ENCODE measurements at regions of chr6 and their contacts with region 1.

Region 1: GRCh38 chr6:47413752-47414422 is 63.7 kb upstream of the CD2AP start:
- DNase-seq: peak; percentile 84
- H3K4me3 ChIP-seq: peak overlapping the region in 2 of 3 experiments; percentile 22 to 73
- H3K27ac ChIP-seq: peak overlapping the region; percentile 40
- H3K4me1 ChIP-seq: peaks cover 4% of the 10 kb centered on the region
- H3K27me3 ChIP-seq: no peaks in the 10 kb centered on the region
- CTCF ChIP-seq: peak; percentile 66 to 74
- POLR2A ChIP-seq: no peak

Region 2: GRCh38 chr6:47097092-47097945 is 316.6 kb before region 1 on chr6:
- CTCF ChIA-PET with region 1: interaction called, 4 read pairs
- POLR2A ChIA-PET with region 1: no interaction called
- dilution Hi-C with region 1: no loop called
- intact Hi-C with region 1: loop called (anchors 10 kb)
- DNase-seq: peak; percentile 77
- H3K4me3 ChIP-seq: no peak overlapping the region
- H3K27ac ChIP-seq: no peak overlapping the region
- H3K4me1 ChIP-seq: peaks cover 8% of the 10 kb centered on the region
- H3K27me3 ChIP-seq: no peaks in the 10 kb centered on the region
- CTCF ChIP-seq: peak; percentile 58 to 62
- POLR2A ChIP-seq: no peak

Region 3: GRCh38 chr6:47344022-47344421 is 69.9 kb before region 1 on chr6:
- CTCF ChIA-PET with region 1: no interaction called
- POLR2A ChIA-PET with region 1: no interaction called
- dilution Hi-C with region 1: no loop called
- intact Hi-C with region 1: no loop called
- DNase-seq: peak; percentile 7
- H3K4me3 ChIP-seq: no peak overlapping the region
- H3K27ac ChIP-seq: no peak overlapping the region
- H3K4me1 ChIP-seq: no peaks in the 10 kb centered on the region
- H3K27me3 ChIP-seq: peaks cover 4% of the 10 kb centered on the region in 2 experiments
- CTCF ChIP-seq: no peak
- POLR2A ChIP-seq: no peak

Region 4: DNA sequence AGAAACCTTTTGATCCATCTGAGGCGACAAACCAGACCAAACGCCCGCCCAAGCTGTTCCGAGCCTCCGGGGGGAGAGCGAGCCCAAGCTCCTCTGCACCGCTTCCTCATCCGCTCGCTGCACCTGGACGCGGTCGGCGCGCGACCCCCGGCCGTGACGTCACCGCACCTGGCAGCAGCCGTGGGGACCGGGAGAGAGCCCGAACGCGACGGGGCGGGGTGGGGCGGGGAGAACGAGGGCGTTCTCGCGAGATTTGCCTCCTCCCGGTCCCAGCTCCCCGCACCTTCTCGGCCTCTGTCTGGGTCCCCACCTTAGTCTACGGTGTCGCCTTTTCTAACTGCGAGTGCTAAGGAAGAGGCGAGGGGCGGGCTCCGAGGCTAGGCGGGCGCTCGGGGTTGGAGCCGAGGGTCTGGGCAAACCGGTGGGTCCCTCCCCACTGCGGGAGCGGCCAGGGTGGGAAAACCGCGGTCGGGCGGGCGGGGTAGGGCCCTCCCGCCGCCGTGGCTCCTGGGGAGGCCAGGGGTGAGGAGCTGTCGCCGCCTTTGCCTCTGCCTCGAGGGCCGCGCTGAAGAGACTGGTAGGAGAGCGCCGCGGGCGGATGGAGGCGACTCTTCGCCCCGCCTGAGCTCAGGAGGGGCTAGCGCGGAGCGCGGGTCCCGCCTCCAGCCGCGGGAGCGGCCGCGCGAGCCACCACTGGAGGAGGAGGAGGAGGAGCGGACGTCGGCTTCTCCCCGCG is 63.8 kb after region 1 on chr6 and contains the start of gene CD2AP:
- CTCF ChIA-PET with region 1: interaction called, 6 read pairs
- POLR2A ChIA-PET with region 1: interaction called, 3 read pairs
- dilution Hi-C with region 1: no loop called
- intact Hi-C with region 1: loop called (anchors 1 kb)
- DNase-seq: peak; percentile 82
- H3K4me3 ChIP-seq: peak within 1 kb of the TSS; percentile 62 to 92 (median 85)
- H3K27ac ChIP-seq: peak within 1 kb of the TSS; percentile 71
- H3K4me1 ChIP-seq: peaks cover 28% of the 10 kb centered on the region
- H3K27me3 ChIP-seq: no peaks in the 10 kb centered on the region
- CTCF ChIP-seq: peak in 1 of 2 donors; percentile 7
- POLR2A ChIP-seq: peak; percentile 68
- total RNA-seq, gene CD2AP: 37.3 and 39.8 TPM in 2 replicates

Region 5: GRCh38 chr6:47529743-47530142 is 115.9 kb after region 1 on chr6:
- CTCF ChIA-PET with region 1: no interaction called
- POLR2A ChIA-PET with region 1: no interaction called
- dilution Hi-C with region 1: no loop called
- intact Hi-C with region 1: loop called (anchors 5 kb)
- DNase-seq: peak; percentile 36
- H3K4me3 ChIP-seq: no peak overlapping the region
- H3K27ac ChIP-seq: no peak overlapping the region
- H3K4me1 ChIP-seq: peaks cover 19% of the 10 kb centered on the region
- H3K27me3 ChIP-seq: no peaks in the 10 kb centered on the region
- CTCF ChIP-seq: no peak
- POLR2A ChIP-seq: no peak

Region 6: DNA sequence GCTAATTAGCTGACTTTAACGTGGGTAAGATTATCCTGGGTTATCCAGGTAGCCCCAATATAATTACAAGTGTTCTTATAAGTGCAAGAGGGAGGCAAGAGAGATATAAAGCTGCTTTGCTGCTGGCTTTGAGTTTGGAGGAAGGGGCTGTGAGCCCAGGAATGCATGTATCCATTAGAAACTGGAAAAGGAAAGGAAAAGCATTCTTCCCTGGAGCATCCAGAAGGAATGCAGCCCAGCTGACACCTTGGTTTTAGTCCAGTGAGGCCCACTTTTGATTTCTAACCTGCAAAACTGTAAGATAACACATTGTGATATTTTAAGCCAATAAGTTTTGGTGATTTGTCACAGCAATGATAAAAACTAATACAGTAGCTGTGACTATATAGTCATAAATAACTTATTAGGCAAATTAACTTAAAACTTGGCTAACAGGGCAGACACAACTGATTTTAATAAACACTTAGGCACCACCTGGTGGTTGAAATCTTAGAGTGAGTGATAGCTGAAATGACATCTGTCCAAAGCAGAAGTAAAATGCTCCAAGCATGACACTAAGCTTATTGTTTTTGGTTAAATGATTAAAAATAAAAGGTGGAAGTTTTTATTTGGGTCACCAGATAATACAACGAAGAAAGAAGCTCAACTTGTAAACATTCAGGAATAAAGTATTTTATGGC is 320.1 kb after region 1 on chr6:
- CTCF ChIA-PET with region 1: interaction called, 46 read pairs
- POLR2A ChIA-PET with region 1: no interaction called
- dilution Hi-C with region 1: no loop called
- intact Hi-C with region 1: loop called (anchors 1 kb)
- DNase-seq: peak; percentile 49
- H3K4me3 ChIP-seq: no peak overlapping the region
- H3K27ac ChIP-seq: no peak overlapping the region
- H3K4me1 ChIP-seq: no peaks in the 10 kb centered on the region
- H3K27me3 ChIP-seq: no peaks in the 10 kb centered on the region
- CTCF ChIP-seq: peak in 1 of 2 donors; percentile 18
- POLR2A ChIP-seq: no peak

Region 7: GRCh38 chr6:47780510-47781356 is 366.8 kb after region 1 on chr6:
- CTCF ChIA-PET with region 1: interaction called, 14 read pairs
- POLR2A ChIA-PET with region 1: no interaction called
- dilution Hi-C with region 1: no loop called
- intact Hi-C with region 1: loop called (anchors 1 kb)
- DNase-seq: peak; percentile 86
- H3K4me3 ChIP-seq: no peak overlapping the region
- H3K27ac ChIP-seq: no peak overlapping the region
- H3K4me1 ChIP-seq: peaks cover 3% of the 10 kb centered on the region
- H3K27me3 ChIP-seq: peaks cover 0 to 4% of the 10 kb centered on the region in 2 experiments
- CTCF ChIP-seq: peak; percentile 50 to 68
- POLR2A ChIP-seq: no peak

Region 8: GRCh38 chr6:48765352-48765961 is 1351.6 kb after region 1 on chr6:
- CTCF ChIA-PET with region 1: interaction called, 3 read pairs
- POLR2A ChIA-PET with region 1: no interaction called
- dilution Hi-C with region 1: no loop called
- intact Hi-C with region 1: loop called (anchors 5 kb)
- DNase-seq: peak; percentile 74
- H3K4me3 ChIP-seq: no peak overlapping the region
- H3K27ac ChIP-seq: no peak overlapping the region
- H3K4me1 ChIP-seq: peaks cover 3% of the 10 kb centered on the region
- H3K27me3 ChIP-seq: no peaks in the 10 kb centered on the region
- CTCF ChIP-seq: peak; percentile 49 to 50
- POLR2A ChIP-seq: no peak